Activated CD8-positive, alpha-beta T cell treated with anti-CD3 and anti-CD28 coated beads, Interleukin-2, amount 10 ng/mL, durations not matched to agents 7 days and 5 days (primary cell): ENCODE measurements at regions of chr10 and their contacts with region 1.

Region 1: DNA sequence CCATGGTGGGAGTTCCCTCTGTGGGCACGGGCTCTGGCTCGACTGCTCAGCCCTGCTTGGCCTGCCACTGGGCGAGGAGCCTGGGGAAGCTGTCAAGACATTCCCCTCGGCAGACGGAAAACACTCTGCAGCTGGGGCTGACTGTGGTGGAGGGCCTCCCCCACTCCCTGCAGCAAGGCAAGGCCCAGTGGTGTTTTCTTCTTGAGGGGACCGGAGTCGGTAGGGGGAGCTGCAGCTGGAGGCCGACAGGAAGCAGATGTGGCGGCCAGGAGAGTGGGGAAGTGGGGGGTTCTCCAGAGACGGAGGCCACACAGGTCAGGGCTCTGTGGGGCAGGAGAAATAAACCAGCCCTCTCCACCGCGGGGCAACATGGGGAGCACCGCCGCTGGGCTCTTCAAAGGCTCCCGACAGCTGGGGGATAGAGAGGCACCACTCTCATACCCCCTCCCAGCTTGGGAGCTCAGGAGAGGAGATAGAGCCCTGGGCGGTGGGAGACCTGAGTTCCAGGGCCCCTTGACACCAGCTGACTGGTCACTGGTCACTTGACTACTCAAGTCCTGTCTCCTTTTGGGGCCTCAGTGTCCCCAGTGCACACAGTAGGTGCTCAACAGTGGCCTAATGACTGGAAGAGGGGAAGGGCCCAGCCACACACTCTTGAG is 43.4 kb downstream of the PPIF start:
- DNase-seq: no peak
- ATAC-seq: peak; percentile 34
- H3K4me3 Mint-ChIP-seq: no peak overlapping the region
- H3K27ac Mint-ChIP-seq: no peak overlapping the region
- H3K4me1 Mint-ChIP-seq: peaks cover 5% of the 10 kb centered on the region
- H3K27me3 Mint-ChIP-seq: no peaks in the 10 kb centered on the region

Region 2: DNA sequence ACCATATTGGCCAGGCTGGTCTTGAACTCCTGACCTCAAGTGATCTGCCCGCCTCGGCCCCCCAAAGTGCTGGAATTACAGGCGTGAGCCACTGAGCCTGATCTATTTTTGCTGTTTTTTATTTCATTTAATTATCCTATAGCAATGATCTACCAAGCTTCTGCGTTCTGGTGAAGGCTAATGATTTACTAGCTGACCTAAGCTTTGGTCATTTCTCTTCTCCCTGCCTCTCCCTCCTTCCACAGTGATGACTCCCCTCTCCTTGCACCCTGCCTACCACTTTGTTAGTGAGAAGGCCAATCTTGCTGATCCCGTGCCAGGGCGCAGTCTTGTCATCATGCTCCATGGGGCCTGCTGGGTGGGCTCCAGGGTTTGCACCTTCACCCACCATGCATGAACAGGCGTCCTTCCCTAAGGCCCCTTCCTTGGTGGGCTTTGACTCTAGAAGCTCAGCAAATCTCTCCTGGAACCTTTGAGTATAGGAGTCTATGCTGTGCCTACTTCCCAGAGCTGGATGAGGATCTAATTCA is 66.6 kb after region 1 on chr10:
- CTCF ChIA-PET with region 1: no interaction called
- POLR2A ChIA-PET with region 1: no interaction called
- DNase-seq: no peak
- ATAC-seq: no peak
- H3K4me3 Mint-ChIP-seq: no peak overlapping the region
- H3K27ac Mint-ChIP-seq: no peak overlapping the region
- H3K4me1 Mint-ChIP-seq: no peaks in the 10 kb centered on the region
- H3K27me3 Mint-ChIP-seq: peaks cover 14% of the 10 kb centered on the region

Region 3: GRCh38 chr10:79468024-79468560 is 77.4 kb after region 1 on chr10:
- CTCF ChIA-PET with region 1: interaction called, 10 read pairs
- POLR2A ChIA-PET with region 1: no interaction called
- DNase-seq: no peak
- ATAC-seq: no peak
- H3K4me3 Mint-ChIP-seq: no peak overlapping the region
- H3K27ac Mint-ChIP-seq: no peak overlapping the region
- H3K4me1 Mint-ChIP-seq: no peaks in the 10 kb centered on the region
- H3K27me3 Mint-ChIP-seq: peaks cover 7% of the 10 kb centered on the region